Dendritic cell treated with granulocyte-macrophage colony-stimulating factor and Interleukin-4, amounts not matched to agents 40 ng/mL and 50 ng/mL, for 4 days (primary cell): ENCODE measurements at regions of chr17 and their contacts with region 1.

Region 1: GRCh38 chr17:75855310-75856081 is at the start of gene WBP2:
- H3K4me3 Mint-ChIP-seq: no peak within 1 kb of the TSS
- H3K27ac Mint-ChIP-seq: no peak within 1 kb of the TSS
- H3K4me1 Mint-ChIP-seq: peaks cover 40% of the 10 kb centered on the region
- H3K27me3 Mint-ChIP-seq: no peaks in the 10 kb centered on the region

Region 2: DNA sequence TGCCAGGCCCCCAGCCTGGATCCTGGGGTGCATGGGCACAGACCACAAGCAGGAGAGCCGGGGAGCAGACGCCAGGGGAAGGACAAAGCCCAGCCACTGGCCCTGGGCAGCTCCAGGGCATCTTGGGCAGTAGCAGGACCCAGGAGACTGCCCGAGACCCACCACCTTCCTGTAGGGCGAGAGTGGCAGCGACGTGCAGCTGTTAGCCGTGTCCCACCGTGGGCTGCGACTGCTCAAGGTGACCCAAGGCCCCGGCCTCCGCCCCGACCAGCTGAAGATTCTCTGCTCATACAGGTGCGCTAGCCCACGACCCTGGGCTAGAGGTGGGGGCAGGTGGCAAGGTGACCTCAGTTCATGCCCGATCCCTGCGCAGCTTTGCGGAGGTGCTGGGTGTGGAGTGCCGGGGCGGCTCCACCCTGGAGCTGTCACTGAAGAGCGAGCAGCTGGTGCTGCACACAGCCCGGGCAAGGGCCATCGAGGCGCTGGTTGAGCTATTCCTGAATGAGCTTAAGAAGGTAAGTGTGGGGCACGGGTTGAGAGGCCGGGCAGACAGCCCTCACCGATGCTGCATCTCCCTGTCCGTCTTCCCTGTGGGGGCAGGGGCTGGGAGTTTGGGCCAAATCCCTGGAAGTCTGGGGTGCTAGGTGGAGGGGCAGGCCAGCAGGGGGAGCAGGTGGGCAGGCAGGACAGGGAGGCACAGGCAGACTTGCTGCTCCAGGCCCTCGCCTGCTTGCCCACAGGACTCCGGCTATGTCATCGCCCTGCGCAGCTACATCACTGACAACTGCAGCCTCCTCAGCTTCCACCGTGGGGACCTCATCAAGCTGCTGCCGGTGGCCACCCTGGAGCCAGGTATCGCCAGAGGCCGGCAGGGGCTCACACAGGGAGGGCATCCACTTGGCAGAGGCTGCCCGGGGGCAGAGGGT is 235.7 kb before region 1 on chr17:
- intact Hi-C with region 1: no loop called
- H3K4me3 Mint-ChIP-seq: no peak overlapping the region
- H3K27ac Mint-ChIP-seq: no peak overlapping the region
- H3K4me1 Mint-ChIP-seq: no peaks in the 10 kb centered on the region
- H3K27me3 Mint-ChIP-seq: no peaks in the 10 kb centered on the region

Region 3: DNA sequence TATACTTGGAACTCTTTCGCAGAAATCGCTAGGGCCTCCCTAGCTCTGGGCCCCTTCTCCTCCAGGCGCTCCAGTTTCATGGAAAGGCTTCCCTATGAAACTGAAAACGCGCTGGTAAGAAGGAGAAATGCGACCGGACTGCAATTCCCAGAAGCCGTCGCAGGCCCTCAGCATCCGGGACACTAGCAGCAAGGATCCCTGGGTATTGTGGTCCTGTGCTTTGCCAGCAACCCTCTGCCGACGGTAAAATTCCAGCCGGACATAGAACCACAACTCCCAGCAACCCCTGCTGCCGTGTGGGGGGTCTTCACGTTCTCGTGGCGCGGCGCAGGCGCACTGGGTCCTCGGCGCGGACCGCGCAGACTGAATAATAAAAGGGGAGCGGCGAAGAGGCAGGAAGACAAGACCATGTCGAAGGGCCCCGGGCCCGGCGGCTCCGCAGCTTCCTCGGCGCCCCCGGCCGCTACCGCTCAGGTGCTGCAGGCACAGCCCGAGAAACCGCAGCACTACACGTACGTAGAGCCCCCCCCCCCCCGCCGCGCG is 71.0 kb before region 1 on chr17 and contains the start of gene UNK:
- intact Hi-C with region 1: loop called (anchors 1 kb)
- H3K4me3 Mint-ChIP-seq: peak within 1 kb of the TSS; percentile 81
- H3K27ac Mint-ChIP-seq: peak within 1 kb of the TSS; percentile 99
- H3K4me1 Mint-ChIP-seq: peaks cover 29% of the 10 kb centered on the region
- H3K27me3 Mint-ChIP-seq: no peaks in the 10 kb centered on the region

Region 4: GRCh38 chr17:75843561-75844529 is 11.7 kb before region 1 on chr17 and contains the start of gene UNC13D:
- intact Hi-C with region 1: loop called (anchors 1 kb)
- H3K4me3 Mint-ChIP-seq: peak within 1 kb of the TSS; percentile 93
- H3K27ac Mint-ChIP-seq: peak within 1 kb of the TSS; percentile 90
- H3K4me1 Mint-ChIP-seq: peaks cover 56% of the 10 kb centered on the region
- H3K27me3 Mint-ChIP-seq: no peaks in the 10 kb centered on the region

Region 5: GRCh38 chr17:75896415-75897159 is 41.1 kb after region 1 on chr17 and contains the start of gene TRIM65:
- intact Hi-C with region 1: loop called (anchors 2 kb)
- H3K4me3 Mint-ChIP-seq: peak within 1 kb of the TSS; percentile 85
- H3K27ac Mint-ChIP-seq: peak within 1 kb of the TSS; percentile 90
- H3K4me1 Mint-ChIP-seq: peaks cover 32% of the 10 kb centered on the region
- H3K27me3 Mint-ChIP-seq: no peaks in the 10 kb centered on the region